Activated CD4-positive, alpha-beta T cell treated with anti-CD3 and anti-CD28 coated beads for 36 hours (primary cell): ENCODE measurements at regions of chr15 and their contacts with region 1.

Region 1: GRCh38 chr15:98894312-98894711 is 113.3 kb downstream of the PGPEP1L start:
- DNase-seq: no peak
- ATAC-seq: no peak
- H3K4me3 Mint-ChIP-seq: no peak overlapping the region
- H3K27ac Mint-ChIP-seq: no peak overlapping the region
- H3K4me1 Mint-ChIP-seq: peaks cover 12% of the 10 kb centered on the region
- H3K27me3 Mint-ChIP-seq: no peaks in the 10 kb centered on the region

Region 2: GRCh38 chr15:98927996-98928395 is 33.7 kb after region 1 on chr15:
- CTCF ChIA-PET with region 1: no interaction called
- POLR2A ChIA-PET with region 1: no interaction called
- intact Hi-C with region 1: loop called in 1 of 2 experiments (anchors 1 kb)
- DNase-seq: no peak
- ATAC-seq: no peak
- H3K4me3 Mint-ChIP-seq: no peak overlapping the region
- H3K27ac Mint-ChIP-seq: no peak overlapping the region
- H3K4me1 Mint-ChIP-seq: no peaks in the 10 kb centered on the region
- H3K27me3 Mint-ChIP-seq: no peaks in the 10 kb centered on the region